CD8-positive, alpha-beta memory T cell (primary cell): ENCODE measurements at regions of chr1 and their contacts with region 1.

Region 1: GRCh38 chr1:227542143-227543120 is 20.9 kb upstream of the ZNF678 start:
- DNase-seq: peak; percentile 79 to 91 (median 86)
- H3K4me3 ChIP-seq: peak overlapping the region; percentile 43
- H3K4me3 Mint-ChIP-seq: peak overlapping the region; percentile 51 to 77 (median 68)
- H3K27ac ChIP-seq: no peak overlapping the region
- H3K27ac Mint-ChIP-seq: peak overlapping the region in 6 of 8 donors; percentile 42 to 82 (median 72)
- H3K4me1 ChIP-seq: peaks cover 6% of the 10 kb centered on the region
- H3K4me1 Mint-ChIP-seq: peaks cover 5 to 11% (median 6%) of the 10 kb centered on the region in 3 donors
- H3K27me3 ChIP-seq: no peaks in the 10 kb centered on the region
- H3K27me3 Mint-ChIP-seq: peaks cover 0 to 3% of the 10 kb centered on the region in 2 donors

Region 2: DNA sequence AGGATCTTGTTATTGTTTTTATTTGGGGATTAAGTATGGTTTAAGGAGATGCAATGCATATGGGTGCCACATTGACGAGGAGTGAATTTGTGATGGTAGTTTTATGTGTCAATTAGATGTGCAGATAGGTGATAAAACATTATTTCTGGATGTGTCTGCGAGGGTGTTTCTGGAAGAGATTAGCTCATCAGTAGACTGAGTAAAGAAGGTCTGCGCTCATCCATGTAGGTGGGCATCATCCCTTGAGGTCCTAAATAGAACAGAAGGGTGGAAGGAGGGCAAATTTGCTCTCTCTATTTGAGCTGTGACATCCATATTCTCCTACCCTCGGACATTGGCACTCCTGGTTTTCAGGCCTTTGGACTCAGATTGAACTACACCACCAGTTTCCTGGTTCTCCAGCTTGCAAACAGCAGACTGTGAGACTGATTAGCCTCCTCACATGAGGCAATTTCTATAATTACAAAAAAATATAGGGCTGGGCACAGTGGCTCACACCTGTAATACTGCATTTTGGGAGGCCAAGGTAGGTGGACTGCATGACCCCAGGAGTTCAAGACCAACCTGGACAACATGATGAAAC is 97.2 kb before region 1 on chr1:
- CTCF ChIA-PET with region 1: no interaction called
- POLR2A ChIA-PET with region 1: no interaction called
- DNase-seq: no peak
- H3K4me3 ChIP-seq: no peak overlapping the region
- H3K4me3 Mint-ChIP-seq: no peak overlapping the region
- H3K27ac ChIP-seq: no peak overlapping the region
- H3K27ac Mint-ChIP-seq: peak overlapping the region in 1 of 8 donors; percentile 2
- H3K4me1 ChIP-seq: no peaks in the 10 kb centered on the region
- H3K4me1 Mint-ChIP-seq: no peaks in the 10 kb centered on the region
- H3K27me3 ChIP-seq: no peaks in the 10 kb centered on the region
- H3K27me3 Mint-ChIP-seq: peaks cover 21 to 46% of the 10 kb centered on the region in 2 donors

Region 3: GRCh38 chr1:227521782-227522181 is 20.6 kb before region 1 on chr1:
- CTCF ChIA-PET with region 1: interaction called, 11 read pairs
- POLR2A ChIA-PET with region 1: no interaction called
- DNase-seq: no peak
- H3K4me3 ChIP-seq: no peak overlapping the region
- H3K4me3 Mint-ChIP-seq: no peak overlapping the region
- H3K27ac ChIP-seq: no peak overlapping the region
- H3K27ac Mint-ChIP-seq: no peak overlapping the region
- H3K4me1 ChIP-seq: no peaks in the 10 kb centered on the region
- H3K4me1 Mint-ChIP-seq: no peaks in the 10 kb centered on the region
- H3K27me3 ChIP-seq: no peaks in the 10 kb centered on the region
- H3K27me3 Mint-ChIP-seq: peaks cover 2 to 11% of the 10 kb centered on the region in 2 donors

Region 4: DNA sequence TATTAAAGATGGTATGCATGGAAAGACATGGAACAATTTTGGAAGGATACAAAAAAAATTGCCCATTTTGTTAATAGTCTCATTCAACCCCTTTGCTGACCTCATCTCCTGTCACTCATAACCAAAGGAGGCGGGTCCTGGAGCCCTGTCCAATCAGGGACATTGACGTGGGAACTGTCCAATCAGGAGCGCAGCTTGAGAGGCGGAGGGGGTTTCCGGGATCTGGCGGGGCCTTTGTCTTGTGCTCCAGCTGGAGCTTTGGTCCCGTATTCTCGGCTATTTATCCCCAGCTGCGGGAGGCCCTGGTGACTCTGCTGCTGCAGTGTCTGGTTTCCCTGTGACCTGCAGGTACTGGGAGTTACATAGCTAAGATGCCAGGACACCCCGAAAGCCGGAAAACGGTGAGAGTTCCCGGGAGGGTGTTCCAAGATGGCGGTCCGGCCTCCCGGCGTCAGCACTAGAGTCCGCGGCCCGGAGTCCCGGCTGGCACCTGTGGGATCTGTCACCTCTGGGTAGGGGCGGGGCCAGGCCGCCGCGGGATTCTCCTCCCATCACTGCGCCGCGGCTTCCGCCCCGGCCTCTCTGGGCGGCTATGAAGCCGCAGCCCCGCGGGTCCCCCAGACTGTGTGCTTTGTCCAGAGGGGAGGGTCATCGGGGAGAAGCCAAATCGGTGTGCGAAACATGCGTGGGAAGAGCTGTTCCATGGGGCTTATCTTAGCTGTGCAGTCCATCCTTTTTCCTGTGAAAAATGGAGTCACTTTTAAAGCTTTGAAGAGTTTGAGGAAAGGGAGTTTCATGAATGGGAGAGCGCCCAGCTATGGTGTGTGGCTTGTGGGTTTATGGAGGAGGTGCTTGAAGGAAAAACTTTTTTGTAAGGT is 21.1 kb after region 1 on chr1 and contains the start of gene ZNF678:
- CTCF ChIA-PET with region 1: interaction called, 18 read pairs
- POLR2A ChIA-PET with region 1: no interaction called
- DNase-seq: peak; percentile 76 to 91 (median 86)
- H3K4me3 ChIP-seq: peak within 1 kb of the TSS; percentile 68
- H3K4me3 Mint-ChIP-seq: peak within 1 kb of the TSS; percentile 91 to 99 (median 96)
- H3K27ac ChIP-seq: peak within 1 kb of the TSS; percentile 85
- H3K27ac Mint-ChIP-seq: peak within 1 kb of the TSS; percentile 89 to 98 (median 96)
- H3K4me1 ChIP-seq: peaks cover 8% of the 10 kb centered on the region
- H3K4me1 Mint-ChIP-seq: peaks cover 35 to 50% (median 40%) of the 10 kb centered on the region in 3 donors
- H3K27me3 ChIP-seq: no peaks in the 10 kb centered on the region
- H3K27me3 Mint-ChIP-seq: peaks cover 22 to 26% of the 10 kb centered on the region in 2 donors
- total RNA-seq, gene ZNF678: 8.2 to 8.5 TPM

Region 5: DNA sequence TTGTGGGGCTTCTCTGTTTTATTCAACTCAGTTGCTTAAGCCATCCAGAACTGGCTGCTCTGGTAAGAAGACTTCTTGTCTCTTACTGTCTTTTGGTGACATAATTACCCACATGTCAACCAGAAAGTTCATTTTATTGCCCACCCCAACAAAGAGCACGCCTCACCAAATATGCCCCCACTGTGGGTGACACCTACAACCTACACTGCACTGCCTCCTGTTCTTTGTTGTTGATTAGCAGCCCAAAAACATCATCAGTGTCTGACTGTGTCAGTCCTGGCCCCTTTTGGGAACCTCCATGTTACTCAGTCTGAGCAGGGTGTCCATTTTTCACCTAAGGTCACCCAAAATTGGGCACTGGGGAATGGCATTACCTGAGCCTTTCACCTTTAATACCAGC is 70.2 kb after region 1 on chr1:
- CTCF ChIA-PET with region 1: no interaction called
- POLR2A ChIA-PET with region 1: no interaction called
- DNase-seq: no peak
- H3K4me3 ChIP-seq: no peak overlapping the region
- H3K4me3 Mint-ChIP-seq: no peak overlapping the region
- H3K27ac ChIP-seq: no peak overlapping the region
- H3K27ac Mint-ChIP-seq: peak overlapping the region in 1 of 8 donors; percentile 17
- H3K4me1 ChIP-seq: no peaks in the 10 kb centered on the region
- H3K4me1 Mint-ChIP-seq: peaks cover 4 to 15% (median 13%) of the 10 kb centered on the region in 3 donors
- H3K27me3 ChIP-seq: no peaks in the 10 kb centered on the region
- H3K27me3 Mint-ChIP-seq: no peaks in the 10 kb centered on the region